ENCODE measurements at regions of chrX and their contacts with region 1.

Region 1: DNA sequence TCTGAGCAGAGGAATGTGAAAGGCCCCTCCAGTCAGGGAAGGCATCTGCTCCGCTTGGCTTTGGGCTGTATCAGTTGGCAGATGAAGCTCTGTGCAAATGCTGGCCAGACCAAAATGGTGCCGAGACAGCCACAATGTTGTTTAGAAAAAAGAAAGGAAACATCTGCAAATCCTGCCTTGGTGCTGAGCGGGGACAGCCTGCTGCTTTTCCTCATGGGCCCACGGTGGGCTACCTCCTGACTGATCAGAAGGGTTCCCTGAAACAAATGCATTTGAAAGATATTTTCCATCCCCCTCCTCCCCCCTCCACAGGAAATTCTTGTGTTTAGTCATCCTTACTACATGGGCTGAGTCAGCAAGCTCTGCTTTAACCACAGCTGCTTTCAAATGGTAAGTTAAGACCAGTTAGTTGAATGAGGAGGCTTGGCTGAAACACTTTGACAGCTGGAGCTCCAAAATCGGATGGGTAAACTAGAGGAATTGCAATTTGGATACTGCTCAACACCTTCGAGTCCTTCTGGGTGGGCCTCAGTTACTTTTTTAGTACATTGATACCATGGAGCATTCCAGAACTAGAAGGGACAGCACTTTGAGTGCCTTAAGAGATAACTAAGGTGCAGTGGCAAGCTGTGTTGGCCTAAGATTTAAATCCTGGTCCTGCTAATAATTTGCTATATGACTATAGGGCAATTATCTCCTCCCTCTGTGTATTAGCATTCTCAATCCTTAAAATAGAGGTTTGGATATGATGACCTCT is 36.0 kb downstream of the PLAC1 start:
- DNase-seq: peak in 1 of 5 donors; percentile 21
- ATAC-seq: peak in 3 of 4 donors; percentile 61 to 81 (median 62)
- H3K4me3 ChIP-seq: no peak overlapping the region
- H3K27ac ChIP-seq: peak overlapping the region in 2 of 12 donors; percentile 19 to 69
- H3K4me1 ChIP-seq: peaks cover 0 to 36% (median 20%) of the 10 kb centered on the region in 12 donors
- H3K27me3 ChIP-seq: peaks cover 0 to 12% (median 0%) of the 10 kb centered on the region in 9 donors
- CTCF ChIP-seq: no peak
- POLR2A ChIP-seq: no peak

Region 2: GRCh38 chrX:134572816-134573682 is 49.2 kb before region 1 on chrX:
- intact Hi-C with region 1: loop called in 1 of 10 experiments (anchors 10 kb)
- DNase-seq: no peak
- ATAC-seq: no peak
- H3K4me3 ChIP-seq: no peak overlapping the region
- H3K27ac ChIP-seq: no peak overlapping the region
- H3K4me1 ChIP-seq: peaks cover 0 to 11% (median 0%) of the 10 kb centered on the region in 12 donors
- H3K27me3 ChIP-seq: peaks cover 0 to 8% (median 0%) of the 10 kb centered on the region in 9 donors
- CTCF ChIP-seq: no peak
- POLR2A ChIP-seq: no peak